ENCODE measurements at regions of chr14 and their contacts with region 1.

Region 1: DNA sequence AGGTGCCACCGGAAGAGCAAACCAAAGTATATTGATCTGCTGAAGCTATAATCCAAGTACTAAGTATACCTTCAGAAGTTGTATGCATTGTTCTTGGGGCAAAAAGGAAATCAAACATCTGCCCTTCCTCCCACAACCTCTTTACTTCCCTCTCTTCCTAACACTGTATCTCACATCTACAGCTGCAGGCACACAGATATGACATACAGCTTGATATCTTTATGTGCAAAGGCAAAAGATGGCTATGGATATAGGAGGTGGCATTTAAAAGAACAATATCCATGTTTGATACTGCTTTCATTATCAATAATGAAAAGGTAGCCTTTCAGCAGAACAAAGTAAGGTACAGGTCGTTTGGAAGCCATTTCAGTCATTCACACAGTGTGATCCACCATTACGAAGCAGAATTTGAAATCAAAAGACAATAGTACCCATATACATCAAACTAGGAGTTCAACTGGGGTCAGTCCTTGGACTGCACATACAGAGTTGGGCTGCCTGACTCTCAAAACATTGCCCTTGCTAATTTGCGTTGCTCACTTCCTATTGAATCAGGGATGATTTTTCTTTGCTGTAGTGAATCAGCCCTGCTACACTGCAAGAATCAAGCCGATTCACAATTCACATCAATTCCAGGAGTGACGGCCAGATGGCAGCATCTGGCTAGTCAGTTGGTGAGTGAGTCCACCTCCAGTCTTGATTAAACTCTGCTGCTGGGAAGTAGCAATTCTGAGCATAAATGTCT is 8.9 kb downstream of the ANG start:
- DNase-seq: peak; percentile 56
- ATAC-seq: peak; percentile 95
- H3K4me3 Mint-ChIP-seq: no peak overlapping the region
- H3K27ac Mint-ChIP-seq: no peak overlapping the region
- H3K4me1 Mint-ChIP-seq: peaks cover 4% of the 10 kb centered on the region
- H3K27me3 Mint-ChIP-seq: no peaks in the 10 kb centered on the region
- CTCF ChIP-seq: peak; percentile 94

Region 2: DNA sequence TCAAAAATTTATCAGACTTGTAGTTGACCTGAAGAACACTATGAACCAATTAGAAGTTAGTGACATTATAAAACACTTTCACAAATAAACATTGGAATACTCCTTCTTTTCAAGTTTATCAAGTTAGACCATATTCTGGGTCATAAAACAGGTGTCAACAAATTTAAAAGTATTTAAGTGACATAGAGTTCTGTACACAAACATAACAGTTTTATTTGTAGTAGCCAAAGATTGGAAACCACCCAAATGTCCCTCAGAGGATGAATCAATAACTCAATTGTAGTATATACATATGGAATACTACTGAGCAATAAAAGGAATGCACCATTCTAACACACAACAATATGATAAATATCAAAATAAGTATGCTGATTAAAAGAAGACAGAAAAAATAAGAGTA is 530.4 kb before region 1 on chr14:
- CTCF ChIA-PET with region 1: no interaction called
- POLR2A ChIA-PET with region 1: no interaction called
- intact Hi-C with region 1: no loop called
- DNase-seq: no peak
- ATAC-seq: no peak
- H3K4me3 Mint-ChIP-seq: no peak overlapping the region
- H3K27ac Mint-ChIP-seq: no peak overlapping the region
- H3K4me1 Mint-ChIP-seq: no peaks in the 10 kb centered on the region
- H3K27me3 Mint-ChIP-seq: peaks cover 9% of the 10 kb centered on the region
- CTCF ChIP-seq: no peak

Region 3: DNA sequence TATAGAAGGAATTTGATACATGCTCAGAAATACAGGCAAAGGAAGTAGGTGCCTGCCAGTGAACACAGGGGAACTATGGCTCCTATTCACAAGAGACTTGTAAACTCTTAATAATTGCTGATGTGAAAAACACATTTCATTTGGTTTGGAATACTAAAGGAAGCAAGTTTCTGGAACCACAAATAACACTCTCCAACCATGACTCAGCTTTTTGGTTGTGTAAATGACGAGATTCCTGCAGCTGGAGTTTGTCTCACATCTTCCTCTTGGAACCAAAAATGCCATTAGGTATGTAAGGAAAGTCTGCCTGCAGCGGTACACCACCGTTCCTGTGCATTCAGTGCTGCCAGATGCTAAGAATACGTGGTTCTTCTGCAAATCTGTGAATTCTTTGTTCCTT is 478.4 kb before region 1 on chr14:
- CTCF ChIA-PET with region 1: no interaction called
- POLR2A ChIA-PET with region 1: no interaction called
- intact Hi-C with region 1: no loop called
- DNase-seq: no peak
- ATAC-seq: no peak
- H3K4me3 Mint-ChIP-seq: no peak overlapping the region
- H3K27ac Mint-ChIP-seq: no peak overlapping the region
- H3K4me1 Mint-ChIP-seq: no peaks in the 10 kb centered on the region
- H3K27me3 Mint-ChIP-seq: peaks cover 9% of the 10 kb centered on the region
- CTCF ChIP-seq: no peak

Region 4: DNA sequence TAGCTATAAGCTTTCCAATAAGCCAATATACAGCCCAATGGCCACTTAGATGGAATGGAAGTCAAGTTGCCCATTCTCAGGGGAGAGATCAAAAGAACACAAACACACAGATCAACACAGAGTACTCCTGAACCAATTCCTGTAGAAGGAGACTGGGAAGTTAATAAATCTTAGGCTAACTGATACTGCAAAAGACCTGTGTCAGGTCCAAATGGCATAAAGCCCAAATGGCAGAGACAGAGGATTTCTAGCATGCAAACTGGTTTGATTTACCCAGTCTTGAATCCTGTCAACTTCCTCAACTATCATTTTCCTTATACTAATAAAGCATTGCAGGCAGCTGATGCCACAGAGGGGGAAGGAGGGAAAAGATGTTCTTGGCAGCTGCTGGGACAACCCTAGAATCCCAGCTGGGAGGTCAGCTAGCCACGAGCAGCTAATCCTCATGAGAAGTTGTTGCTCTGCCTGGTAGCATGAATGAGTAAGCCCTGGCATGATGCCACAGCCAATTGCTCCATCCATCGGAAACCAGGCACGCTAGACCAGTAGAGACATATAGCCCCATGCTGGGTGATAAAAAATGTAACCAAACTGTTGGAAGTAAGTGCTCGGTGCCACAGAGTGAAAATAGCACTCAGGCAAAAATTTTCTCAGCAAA is 17.3 kb after region 1 on chr14:
- CTCF ChIA-PET with region 1: interaction called, 14 read pairs
- POLR2A ChIA-PET with region 1: interaction called, 3 read pairs
- intact Hi-C with region 1: no loop called
- DNase-seq: no peak
- ATAC-seq: no peak
- H3K4me3 Mint-ChIP-seq: no peak overlapping the region
- H3K27ac Mint-ChIP-seq: peak overlapping the region; percentile 94
- H3K4me1 Mint-ChIP-seq: peaks cover 68% of the 10 kb centered on the region
- H3K27me3 Mint-ChIP-seq: no peaks in the 10 kb centered on the region
- CTCF ChIP-seq: no peak

Region 5: GRCh38 chr14:20757965-20758364 is 60.5 kb after region 1 on chr14:
- CTCF ChIA-PET with region 1: interaction called, 20 read pairs
- POLR2A ChIA-PET with region 1: no interaction called
- intact Hi-C with region 1: loop called (anchors 1 kb)
- DNase-seq: no peak
- ATAC-seq: peak; percentile 25
- H3K4me3 Mint-ChIP-seq: no peak overlapping the region
- H3K27ac Mint-ChIP-seq: no peak overlapping the region
- H3K4me1 Mint-ChIP-seq: peaks cover 2% of the 10 kb centered on the region
- H3K27me3 Mint-ChIP-seq: no peaks in the 10 kb centered on the region
- CTCF ChIP-seq: no peak

Region 6: DNA sequence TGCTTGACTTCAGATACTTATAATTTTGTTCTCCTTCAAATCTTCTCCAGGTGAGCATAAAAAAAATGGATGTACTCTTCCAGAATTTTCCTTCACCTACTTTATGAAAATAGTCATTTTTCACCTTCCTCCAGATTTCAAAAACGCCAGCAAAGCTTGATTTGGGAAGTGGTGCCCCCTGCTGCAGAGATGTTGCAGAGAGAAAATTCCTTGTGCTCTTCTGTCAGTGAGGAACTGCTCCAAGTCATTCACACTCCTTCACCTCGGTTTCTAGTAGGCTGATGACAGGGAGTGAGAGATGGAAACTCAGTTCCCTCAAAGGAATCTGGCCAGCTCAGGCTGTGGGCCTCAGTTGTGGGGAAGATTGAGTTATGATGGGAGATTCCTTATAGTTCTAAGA is 169.5 kb after region 1 on chr14:
- CTCF ChIA-PET with region 1: interaction called, 72 read pairs
- POLR2A ChIA-PET with region 1: no interaction called
- intact Hi-C with region 1: no loop called
- DNase-seq: no peak
- ATAC-seq: no peak
- H3K4me3 Mint-ChIP-seq: no peak overlapping the region
- H3K27ac Mint-ChIP-seq: no peak overlapping the region
- H3K4me1 Mint-ChIP-seq: no peaks in the 10 kb centered on the region
- H3K27me3 Mint-ChIP-seq: peaks cover 30% of the 10 kb centered on the region
- CTCF ChIP-seq: no peak

Region 7: GRCh38 chr14:20873370-20874177 is 176.1 kb after region 1 on chr14:
- CTCF ChIA-PET with region 1: interaction called, 28 read pairs
- POLR2A ChIA-PET with region 1: no interaction called
- intact Hi-C with region 1: loop called (anchors 1 kb)
- DNase-seq: peak; percentile 66
- ATAC-seq: peak; percentile 71
- H3K4me3 Mint-ChIP-seq: no peak overlapping the region
- H3K27ac Mint-ChIP-seq: no peak overlapping the region
- H3K4me1 Mint-ChIP-seq: peaks cover 8% of the 10 kb centered on the region
- H3K27me3 Mint-ChIP-seq: peaks cover 26% of the 10 kb centered on the region
- CTCF ChIP-seq: peak; percentile 87

Region 8: GRCh38 chr14:20970983-20971704 is 273.7 kb after region 1 on chr14:
- CTCF ChIA-PET with region 1: interaction called, 19 read pairs
- POLR2A ChIA-PET with region 1: no interaction called
- intact Hi-C with region 1: loop called (anchors 1 kb)
- DNase-seq: peak; percentile 77
- ATAC-seq: peak; percentile 95
- H3K4me3 Mint-ChIP-seq: peak overlapping the region; percentile 90
- H3K27ac Mint-ChIP-seq: no peak overlapping the region
- H3K4me1 Mint-ChIP-seq: peaks cover 9% of the 10 kb centered on the region
- H3K27me3 Mint-ChIP-seq: peaks cover 50% of the 10 kb centered on the region
- CTCF ChIP-seq: no peak